Panc1 (cell line): ENCODE measurements at regions of chr15 and their contacts with region 1.

Region 1: GRCh38 chr15:58182460-58183163 is 44.4 kb downstream of the AQP9 start:
- DNase-seq: peak; percentile 32
- ATAC-seq: peak; percentile 98
- H3K4me3 ChIP-seq: no peak overlapping the region
- H3K27ac ChIP-seq: no peak overlapping the region
- H3K4me1 ChIP-seq: no peaks in the 10 kb centered on the region
- H3K27me3 ChIP-seq: peaks cover 17% of the 10 kb centered on the region
- CTCF ChIP-seq: peak; percentile 92

Region 2: GRCh38 chr15:57541805-57542504 is 640.7 kb before region 1 on chr15:
- CTCF ChIA-PET with region 1: no interaction called
- POLR2A ChIA-PET with region 1: no interaction called
- in situ Hi-C with region 1: no loop called
- intact Hi-C with region 1: no loop called
- DNase-seq: no peak
- ATAC-seq: peak; percentile 72
- H3K4me3 ChIP-seq: no peak overlapping the region
- H3K27ac ChIP-seq: no peak overlapping the region
- H3K4me1 ChIP-seq: no peaks in the 10 kb centered on the region; the same call in 1 of the 2 replicates
- H3K27me3 ChIP-seq: no peaks in the 10 kb centered on the region
- CTCF ChIP-seq: peak; percentile 92

Region 3: GRCh38 chr15:57561041-57561711 is 621.4 kb before region 1 on chr15:
- CTCF ChIA-PET with region 1: no interaction called
- POLR2A ChIA-PET with region 1: no interaction called
- in situ Hi-C with region 1: no loop called
- intact Hi-C with region 1: loop called (anchors 10 kb)
- DNase-seq: peak; percentile 48
- ATAC-seq: peak; percentile 96
- H3K4me3 ChIP-seq: no peak overlapping the region
- H3K27ac ChIP-seq: no peak overlapping the region
- H3K4me1 ChIP-seq: no peaks in the 10 kb centered on the region
- H3K27me3 ChIP-seq: no peaks in the 10 kb centered on the region
- CTCF ChIP-seq: peak; percentile 94

Region 4: GRCh38 chr15:57732526-57733331 is 449.9 kb before region 1 on chr15:
- CTCF ChIA-PET with region 1: no interaction called
- POLR2A ChIA-PET with region 1: no interaction called
- in situ Hi-C with region 1: no loop called
- intact Hi-C with region 1: loop called (anchors 10 kb)
- DNase-seq: peak; percentile 39
- ATAC-seq: 0 out of 2 replicates have a peak, but pooled peaks have one; percentile 77
- H3K4me3 ChIP-seq: no peak overlapping the region
- H3K27ac ChIP-seq: no peak overlapping the region
- H3K4me1 ChIP-seq: no peaks in the 10 kb centered on the region
- H3K27me3 ChIP-seq: no peaks in the 10 kb centered on the region
- CTCF ChIP-seq: peak; percentile 92

Region 5: DNA sequence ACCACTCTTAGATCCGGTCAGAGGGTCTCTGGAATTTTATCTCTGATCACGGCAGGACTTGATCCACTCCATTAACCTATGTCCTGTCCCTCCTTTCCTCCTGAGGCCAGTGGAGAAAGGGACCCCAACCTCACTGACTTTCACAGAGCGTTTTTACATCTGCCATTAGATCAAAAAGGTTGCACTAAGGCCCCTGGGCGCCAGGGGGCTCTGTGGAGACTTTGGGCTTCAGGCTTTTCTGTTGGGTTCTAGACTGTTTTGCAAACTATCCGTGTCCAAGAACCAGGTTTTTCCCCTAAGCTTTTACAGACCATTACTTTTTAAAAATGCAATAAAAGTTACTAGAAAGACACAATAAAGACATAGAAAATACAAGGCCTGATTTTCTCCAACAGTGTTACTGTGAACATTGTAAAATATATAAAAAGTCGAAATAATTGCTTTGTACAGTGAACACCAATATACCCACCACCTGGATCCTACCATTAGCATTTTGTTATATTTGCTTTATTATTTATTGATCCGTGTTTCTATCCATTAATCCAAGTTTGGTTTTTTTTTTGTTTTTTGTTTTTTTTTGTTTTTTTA is 316.4 kb before region 1 on chr15:
- CTCF ChIA-PET with region 1: no interaction called
- POLR2A ChIA-PET with region 1: no interaction called
- in situ Hi-C with region 1: no loop called
- intact Hi-C with region 1: loop called (anchors 1 kb)
- DNase-seq: no peak
- ATAC-seq: peak; percentile 81
- H3K4me3 ChIP-seq: no peak overlapping the region
- H3K27ac ChIP-seq: no peak overlapping the region
- H3K4me1 ChIP-seq: no peaks in the 10 kb centered on the region
- H3K27me3 ChIP-seq: peaks cover 7% of the 10 kb centered on the region
- CTCF ChIP-seq: peak; percentile 89

Region 6: GRCh38 chr15:58043192-58043903 is 139.3 kb before region 1 on chr15:
- CTCF ChIA-PET with region 1: no interaction called
- POLR2A ChIA-PET with region 1: no interaction called
- in situ Hi-C with region 1: no loop called
- intact Hi-C with region 1: loop called (anchors 5 kb)
- DNase-seq: peak; percentile 12
- ATAC-seq: peak; percentile 65; the same call in 1 of the 2 replicates
- H3K4me3 ChIP-seq: no peak overlapping the region
- H3K27ac ChIP-seq: no peak overlapping the region
- H3K4me1 ChIP-seq: no peaks in the 10 kb centered on the region
- H3K27me3 ChIP-seq: peaks cover 5% of the 10 kb centered on the region; the same call in 1 of the 2 replicates
- CTCF ChIP-seq: peak; percentile 73; the same call in 1 of the 2 replicates

Region 7: GRCh38 chr15:58077427-58077826 is 105.2 kb before region 1 on chr15:
- CTCF ChIA-PET with region 1: interaction called, 6 read pairs
- POLR2A ChIA-PET with region 1: no interaction called
- in situ Hi-C with region 1: no loop called
- intact Hi-C with region 1: loop called (anchors 5 kb)
- DNase-seq: no peak
- ATAC-seq: no peak
- H3K4me3 ChIP-seq: no peak overlapping the region
- H3K27ac ChIP-seq: no peak overlapping the region
- H3K4me1 ChIP-seq: no peaks in the 10 kb centered on the region; the same call in 1 of the 2 replicates
- H3K27me3 ChIP-seq: peaks cover 17% of the 10 kb centered on the region
- CTCF ChIP-seq: peak; percentile 33

Region 8: GRCh38 chr15:58115692-58116091 is 66.9 kb before region 1 on chr15:
- CTCF ChIA-PET with region 1: no interaction called
- POLR2A ChIA-PET with region 1: no interaction called
- in situ Hi-C with region 1: no loop called
- intact Hi-C with region 1: loop called (anchors 1 kb)
- DNase-seq: no peak
- ATAC-seq: no peak
- H3K4me3 ChIP-seq: no peak overlapping the region
- H3K27ac ChIP-seq: no peak overlapping the region
- H3K4me1 ChIP-seq: no peaks in the 10 kb centered on the region
- H3K27me3 ChIP-seq: 0 out of 2 replicates have a peak, but pooled peaks cover 2% of the 10 kb centered on the region
- CTCF ChIP-seq: peak; percentile 40; the same call in 1 of the 2 replicates